ENCODE measurements at regions of chr21 and their contacts with region 1.

Region 1: GRCh38 chr21:38219049-38219628 is 37.7 kb upstream of the KCNJ15 start:
- DNase-seq: peak; percentile 83 to 90 (median 87)
- ATAC-seq: peak; percentile 93
- H3K4me3 ChIP-seq: no peak overlapping the region
- H3K27ac ChIP-seq: peak overlapping the region; percentile 86
- H3K4me1 ChIP-seq: peaks cover 0 to 15% of the 10 kb centered on the region in 2 experiments; a peak in 2 of 5 replicates
- H3K27me3 ChIP-seq: no peaks in the 10 kb centered on the region; a peak in 1 of 5 replicates
- CTCF ChIP-seq: peak; percentile 85 to 95 (median 89)
- EP300 ChIP-seq: no peak
- POLR2A ChIP-seq: no peak
- RAD21 ChIP-seq: peak; percentile 36 to 82; a peak in 3 of 4 replicates

Region 2: DNA sequence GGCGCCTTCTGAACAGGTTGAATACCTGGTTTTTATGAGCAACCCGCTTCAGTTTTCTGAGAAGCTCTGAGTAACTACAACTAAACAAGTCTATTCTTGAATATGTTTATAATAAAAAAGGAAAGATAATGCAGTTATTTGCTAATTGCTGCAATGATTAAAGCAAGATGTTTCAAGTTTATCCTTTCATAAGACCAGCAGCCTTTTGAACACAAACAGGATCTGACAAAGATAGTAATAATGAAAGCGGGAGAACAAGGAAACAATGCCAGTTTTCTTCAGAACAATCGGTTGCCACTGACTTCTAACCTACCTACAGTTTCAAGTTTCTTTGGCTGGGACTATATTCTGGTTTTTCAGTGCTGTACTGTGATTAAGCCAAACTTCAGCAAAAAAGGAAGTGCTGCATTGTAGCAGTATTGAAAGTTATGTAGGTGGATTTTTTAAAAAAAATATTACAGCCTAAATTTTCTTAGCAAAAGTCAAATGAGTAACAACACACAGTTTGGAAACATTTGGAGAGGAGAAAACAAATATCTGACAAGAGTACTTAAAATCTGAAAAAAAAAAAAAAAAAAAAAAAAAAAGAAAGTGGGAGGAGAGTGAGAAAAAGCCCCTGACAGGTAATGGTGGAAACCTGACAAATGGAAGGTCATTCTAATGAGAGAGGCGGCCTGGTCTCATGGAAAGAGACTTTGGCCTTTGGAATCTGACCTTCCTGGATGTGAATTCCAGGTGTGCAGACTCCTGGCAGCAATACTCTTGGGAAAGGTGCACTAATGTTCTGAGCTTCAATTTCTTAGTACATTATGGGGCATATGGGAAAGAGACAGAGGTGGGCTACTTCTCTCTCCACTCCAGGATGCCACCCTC is 49.1 kb after region 1 on chr21:
- CTCF ChIA-PET with region 1: no interaction called
- POLR2A ChIA-PET with region 1: no interaction called
- in situ Hi-C with region 1: no loop called
- intact Hi-C with region 1: no loop called
- DNase-seq: no peak
- ATAC-seq: no peak
- H3K4me3 ChIP-seq: no peak overlapping the region
- H3K27ac ChIP-seq: no peak overlapping the region
- H3K4me1 ChIP-seq: no peaks in the 10 kb centered on the region
- H3K27me3 ChIP-seq: peaks cover 17 to 32% of the 10 kb centered on the region in 2 experiments
- CTCF ChIP-seq: no peak
- EP300 ChIP-seq: no peak
- POLR2A ChIP-seq: no peak
- RAD21 ChIP-seq: no peak

Region 3: GRCh38 chr21:38333301-38334272 is 114.4 kb after region 1 on chr21:
- CTCF ChIA-PET with region 1: interaction called, 3 read pairs
- POLR2A ChIA-PET with region 1: interaction called, 3 read pairs
- in situ Hi-C with region 1: no loop called
- intact Hi-C with region 1: loop called (anchors 1 kb)
- DNase-seq: peak in 1 of 4 experiments; percentile 17
- ATAC-seq: peak; percentile 75
- H3K4me3 ChIP-seq: no peak overlapping the region
- H3K27ac ChIP-seq: no peak overlapping the region
- H3K4me1 ChIP-seq: no peaks in the 10 kb centered on the region
- H3K27me3 ChIP-seq: peaks cover 0 to 20% of the 10 kb centered on the region in 2 experiments; a peak in 2 of 5 replicates
- CTCF ChIP-seq: peak; percentile 33 to 43 (median 34); a peak in 5 of 6 replicates
- EP300 ChIP-seq: no peak
- POLR2A ChIP-seq: no peak
- RAD21 ChIP-seq: peak in 1 of 2 experiments; percentile 43; a peak in 2 of 4 replicates

Measured in K562 (cell line).